ENCODE measurements at regions of chr20 and their contacts with region 1.

Region 1: GRCh38 chr20:18323705-18324104 is 35.4 kb downstream of the ZNF133 start:
- DNase-seq: no peak
- H3K4me3 ChIP-seq: no peak overlapping the region
- H3K4me3 Mint-ChIP-seq: no peak overlapping the region
- H3K27ac Mint-ChIP-seq: peak overlapping the region; percentile 69
- H3K4me1 ChIP-seq: peaks cover 63% of the 10 kb centered on the region
- H3K4me1 Mint-ChIP-seq: peaks cover 17% of the 10 kb centered on the region
- H3K27me3 ChIP-seq: no peaks in the 10 kb centered on the region
- H3K27me3 Mint-ChIP-seq: no peaks in the 10 kb centered on the region
- CTCF ChIP-seq: no peak

Region 2: GRCh38 chr20:18287915-18288748 is 35.6 kb before region 1 on chr20 and contains the start of gene ZNF133:
- CTCF ChIA-PET with region 1: interaction called, 3 read pairs
- POLR2A ChIA-PET with region 1: interaction called, 4 read pairs
- intact Hi-C with region 1: loop called (anchors 2 kb)
- DNase-seq: peak; percentile 98 to 99
- H3K4me3 ChIP-seq: peak within 1 kb of the TSS; percentile 68
- H3K4me3 Mint-ChIP-seq: peak within 1 kb of the TSS; percentile 96
- H3K27ac Mint-ChIP-seq: peak within 1 kb of the TSS; percentile 96
- H3K4me1 ChIP-seq: 0 out of 2 replicates have a peak, but pooled peaks cover 13% of the 10 kb centered on the region
- H3K4me1 Mint-ChIP-seq: peaks cover 17% of the 10 kb centered on the region
- H3K27me3 ChIP-seq: no peaks in the 10 kb centered on the region
- H3K27me3 Mint-ChIP-seq: no peaks in the 10 kb centered on the region
- CTCF ChIP-seq: peak in 1 of 2 experiments; percentile 46
- total RNA-seq, gene ZNF133: 14.8 and 17.4 TPM in 2 replicates

Region 3: GRCh38 chr20:18299364-18299763 is 24.3 kb before region 1 on chr20:
- CTCF ChIA-PET with region 1: no interaction called
- POLR2A ChIA-PET with region 1: no interaction called
- intact Hi-C with region 1: no loop called
- DNase-seq: no peak
- H3K4me3 ChIP-seq: no peak overlapping the region
- H3K4me3 Mint-ChIP-seq: no peak overlapping the region
- H3K27ac Mint-ChIP-seq: no peak overlapping the region
- H3K4me1 ChIP-seq: no peaks in the 10 kb centered on the region
- H3K4me1 Mint-ChIP-seq: no peaks in the 10 kb centered on the region
- H3K27me3 ChIP-seq: no peaks in the 10 kb centered on the region
- H3K27me3 Mint-ChIP-seq: no peaks in the 10 kb centered on the region
- CTCF ChIP-seq: no peak